HEK293 (cell line): ENCODE measurements at regions of chr16 and their contacts with region 1.

Region 1: GRCh38 chr16:401468-402348 is at the start of gene DECR2:
- H3K4me3 ChIP-seq: peak within 1 kb of the TSS; percentile 81
- H3K27ac ChIP-seq: peak within 1 kb of the TSS; percentile 90
- H3K4me1 ChIP-seq: no peaks in the 10 kb centered on the region
- CTCF ChIP-seq: peak; percentile 97

Region 2: DNA sequence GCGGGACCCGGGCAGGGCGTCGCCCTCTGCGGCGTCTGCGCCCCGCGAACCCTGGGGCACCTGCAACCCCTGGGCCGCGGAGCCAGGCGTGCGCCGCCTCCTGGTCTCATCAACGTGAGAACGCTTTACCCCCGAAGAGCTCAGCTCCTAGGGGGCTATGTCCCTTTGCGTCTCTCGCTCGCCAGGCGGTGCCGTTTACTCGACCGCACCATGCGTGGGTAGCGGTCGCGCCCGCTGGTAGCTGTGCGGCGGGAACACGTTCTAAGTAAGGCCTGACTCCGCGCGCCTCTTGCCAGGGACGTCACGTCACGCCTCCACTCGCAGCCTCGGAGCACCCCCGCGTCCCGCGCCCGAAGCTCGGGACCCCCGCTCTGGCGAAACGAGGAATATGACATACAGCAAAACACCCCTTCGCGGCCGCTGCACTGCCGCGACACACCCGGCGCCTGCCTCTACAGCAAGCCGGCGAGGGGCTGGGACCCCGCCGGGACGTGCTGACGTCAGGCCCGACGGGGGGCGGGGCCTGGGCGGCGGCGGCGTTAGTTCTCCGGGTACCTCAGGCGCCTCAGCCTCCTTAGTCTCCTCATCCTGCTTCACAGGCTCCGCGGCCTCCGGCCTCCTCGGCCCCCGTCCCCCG is 23.5 kb after region 1 on chr16 and contains the start of gene RAB11FIP3:
- CTCF ChIA-PET with region 1: interaction called, 3 read pairs
- POLR2A ChIA-PET with region 1: interaction called, 14 read pairs
- H3K4me3 ChIP-seq: peak within 1 kb of the TSS; percentile 74
- H3K27ac ChIP-seq: peak within 1 kb of the TSS; percentile 78; the same call in 1 of the 2 replicates
- H3K4me1 ChIP-seq: peaks cover 9% of the 10 kb centered on the region
- CTCF ChIP-seq: peak; percentile 88

Region 3: GRCh38 chr16:714558-715476 is 313.1 kb after region 1 on chr16 and contains the start of gene METRN:
- CTCF ChIA-PET with region 1: no interaction called
- POLR2A ChIA-PET with region 1: no interaction called
- H3K4me3 ChIP-seq: peak within 1 kb of the TSS; percentile 44
- H3K27ac ChIP-seq: peak within 1 kb of the TSS; percentile 66; the same call in 1 of the 2 replicates
- H3K4me1 ChIP-seq: peaks cover 9% of the 10 kb centered on the region
- CTCF ChIP-seq: no peak